RWPE1 (cell line): ENCODE measurements at regions of chr20 and their contacts with region 1.

Region 1: GRCh38 chr20:57329608-57330221 is at the start of gene SPO11:
- DNase-seq: no peak
- H3K27ac ChIP-seq: no peak within 1 kb of the TSS
- CTCF ChIP-seq: no peak

Region 2: DNA sequence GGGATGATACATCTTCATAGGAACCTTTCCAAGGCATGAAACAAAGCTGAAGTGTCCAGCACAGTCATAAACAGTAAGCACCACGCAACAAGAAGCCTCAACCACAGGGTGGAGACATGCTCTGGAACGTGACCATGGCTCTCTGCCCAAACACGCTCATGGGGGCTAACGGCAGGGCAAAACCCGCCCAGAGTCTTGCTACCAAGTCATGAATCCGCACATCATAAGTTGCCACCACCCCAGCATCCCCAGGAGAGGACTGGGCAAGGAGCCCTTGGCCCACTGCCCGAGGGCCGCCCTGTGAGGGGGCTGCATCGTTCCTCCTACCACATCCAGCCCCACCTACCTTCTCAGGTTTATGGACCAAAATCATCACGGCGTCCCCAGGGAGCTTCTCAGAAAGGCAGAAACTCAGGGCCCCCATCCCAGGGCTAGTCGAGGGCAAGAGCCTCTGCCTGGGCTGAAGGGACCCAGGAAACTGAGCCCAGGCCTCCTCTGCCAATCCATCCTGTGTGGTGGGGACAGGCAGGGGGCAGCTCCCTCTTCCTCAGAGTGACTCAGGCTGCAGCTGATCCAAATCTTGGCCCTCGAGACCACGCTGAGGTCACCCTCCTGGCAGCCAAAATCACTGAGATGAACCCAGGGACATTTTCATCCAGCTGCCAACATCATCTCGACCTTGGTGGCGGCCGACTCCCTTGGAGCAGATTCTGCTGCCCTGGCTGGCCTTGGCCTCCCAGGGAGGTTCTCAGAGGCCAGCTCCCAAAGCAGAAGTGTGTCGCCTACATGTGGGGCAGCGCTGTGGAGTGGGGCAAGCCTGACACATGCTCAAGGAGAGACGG is 105.8 kb before region 1 on chr20:
- CTCF ChIA-PET with region 1: interaction called, 22 read pairs
- POLR2A ChIA-PET with region 1: no interaction called
- DNase-seq: peak; percentile 53
- H3K27ac ChIP-seq: peak overlapping the region; percentile 33
- CTCF ChIP-seq: no peak

Region 3: DNA sequence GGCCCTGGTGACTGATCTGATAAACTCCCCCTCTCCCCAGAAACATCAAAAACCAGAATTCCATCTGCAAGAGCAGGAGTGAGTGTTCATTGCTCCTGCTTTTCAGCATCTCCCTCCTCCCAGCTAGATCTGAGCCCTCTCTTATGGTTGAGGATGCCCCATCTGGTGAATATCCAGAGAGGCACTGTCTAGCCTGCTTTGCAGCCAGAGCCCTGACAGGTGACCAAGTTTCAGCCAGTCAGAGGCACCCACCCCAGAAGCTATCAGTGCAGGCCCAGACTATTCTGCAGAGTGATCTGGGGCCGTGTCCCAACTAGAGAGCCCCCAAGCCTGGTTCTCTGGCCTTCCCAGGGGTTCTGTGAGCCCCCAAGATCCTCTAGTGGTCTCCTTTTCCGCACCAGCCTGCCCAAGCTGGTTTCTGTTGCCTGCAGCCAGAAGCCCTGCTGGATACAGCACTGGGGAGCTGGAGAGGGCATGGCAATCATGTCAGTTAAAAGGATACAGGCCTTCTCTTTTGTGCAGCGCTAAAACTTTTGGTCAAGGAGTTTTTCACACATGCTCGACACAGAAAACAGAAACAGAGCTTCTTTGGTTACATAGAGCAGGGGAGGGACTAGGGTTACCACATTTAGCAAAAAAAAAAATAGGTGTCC is 56.7 kb before region 1 on chr20:
- CTCF ChIA-PET with region 1: interaction called, 12 read pairs
- POLR2A ChIA-PET with region 1: no interaction called
- DNase-seq: no peak
- H3K27ac ChIP-seq: no peak overlapping the region
- CTCF ChIP-seq: no peak